ENCODE measurements at regions of chr19 and their contacts with region 1.

Region 1: DNA sequence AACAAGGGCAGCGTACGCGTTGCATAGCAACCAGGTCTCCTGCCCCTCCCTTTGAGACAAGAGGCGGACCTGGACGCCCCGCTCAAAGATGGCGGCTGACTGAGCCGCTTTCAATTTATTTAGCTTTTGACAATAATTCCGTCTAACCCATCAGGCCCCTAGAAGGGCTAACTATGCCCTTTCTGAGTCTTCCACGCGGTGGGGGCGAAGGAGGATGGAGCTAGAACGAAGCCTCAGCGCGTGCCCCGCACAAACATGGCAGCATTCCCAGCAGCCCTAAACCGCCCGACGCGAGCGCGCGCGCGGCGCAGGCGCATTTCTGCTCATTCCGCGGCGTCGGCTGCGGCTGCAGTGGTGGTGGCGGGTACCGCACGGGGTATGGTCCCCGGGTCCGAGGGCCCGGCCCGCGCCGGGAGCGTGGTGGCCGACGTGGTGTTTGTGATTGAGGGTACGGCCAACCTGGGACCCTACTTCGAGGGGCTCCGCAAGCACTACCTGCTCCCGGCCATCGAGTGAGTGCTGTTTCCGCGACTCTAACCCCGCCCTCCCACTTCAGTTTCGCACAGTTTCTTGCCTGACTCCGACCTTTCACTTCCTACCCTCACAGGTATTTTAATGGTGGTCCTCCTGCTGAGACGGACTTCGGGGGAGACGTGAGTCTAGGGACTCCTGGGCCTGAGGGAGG is at the start of gene MED25:
- DNase-seq: peak; percentile 98
- ATAC-seq: peak; percentile 56
- H3K4me3 ChIP-seq: peak within 1 kb of the TSS; percentile 69 to 99 (median 94)
- H3K4me3 Mint-ChIP-seq: peak within 1 kb of the TSS; percentile 97
- H3K27ac ChIP-seq: peak within 1 kb of the TSS; percentile 89 to 98
- H3K27ac Mint-ChIP-seq: peak within 1 kb of the TSS; percentile 98
- H3K4me1 ChIP-seq: peaks cover 13 to 29% of the 10 kb centered on the region in 2 donors
- H3K4me1 Mint-ChIP-seq: peaks cover 41% of the 10 kb centered on the region
- H3K27me3 ChIP-seq: no peaks in the 10 kb centered on the region
- H3K27me3 Mint-ChIP-seq: no peaks in the 10 kb centered on the region
- CTCF ChIP-seq: peak; percentile 44
- total RNA-seq, gene MED25: 123 and 126 TPM in 2 replicates

Region 2: GRCh38 chr19:49118565-49119410 is 699.3 kb before region 1 on chr19 and contains the start of gene C19orf73:
- CTCF ChIA-PET with region 1: no interaction called
- POLR2A ChIA-PET with region 1: no interaction called
- intact Hi-C with region 1: loop called (anchors 5 kb)
- DNase-seq: peak; percentile 99
- ATAC-seq: peak; percentile 81
- H3K4me3 ChIP-seq: peak within 1 kb of the TSS; percentile 39 to 88 (median 62)
- H3K4me3 Mint-ChIP-seq: peak within 1 kb of the TSS; percentile 90
- H3K27ac ChIP-seq: peak within 1 kb of the TSS; percentile 93 to 95
- H3K27ac Mint-ChIP-seq: peak within 1 kb of the TSS; percentile 93
- H3K4me1 ChIP-seq: peaks cover 22 to 33% of the 10 kb centered on the region in 2 donors
- H3K4me1 Mint-ChIP-seq: peaks cover 41% of the 10 kb centered on the region
- H3K27me3 ChIP-seq: peaks cover 0 to 11% (median 2%) of the 10 kb centered on the region in 4 experiments
- H3K27me3 Mint-ChIP-seq: peaks cover 6% of the 10 kb centered on the region
- CTCF ChIP-seq: peak; percentile 53
- total RNA-seq, gene C19orf73: 3.9 and 5.3 TPM in 2 replicates

Region 3: GRCh38 chr19:49473868-49474544 is 344.1 kb before region 1 on chr19 and contains the start of gene FLT3LG:
- CTCF ChIA-PET with region 1: no interaction called
- POLR2A ChIA-PET with region 1: no interaction called
- intact Hi-C with region 1: no loop called
- DNase-seq: peak; percentile 94
- ATAC-seq: peak; percentile 52
- H3K4me3 ChIP-seq: peak within 1 kb of the TSS in 4 of 5 experiments; percentile 53 to 98 (median 70)
- H3K4me3 Mint-ChIP-seq: peak within 1 kb of the TSS; percentile 93
- H3K27ac ChIP-seq: peak within 1 kb of the TSS; percentile 75 to 81
- H3K27ac Mint-ChIP-seq: peak within 1 kb of the TSS; percentile 97
- H3K4me1 ChIP-seq: peaks cover 43 to 73% of the 10 kb centered on the region in 2 donors
- H3K4me1 Mint-ChIP-seq: peaks cover 57% of the 10 kb centered on the region
- H3K27me3 ChIP-seq: no peaks in the 10 kb centered on the region
- H3K27me3 Mint-ChIP-seq: no peaks in the 10 kb centered on the region
- CTCF ChIP-seq: peak; percentile 89
- total RNA-seq, gene FLT3LG: 27.8 and 31.0 TPM in 2 replicates

Region 4: DNA sequence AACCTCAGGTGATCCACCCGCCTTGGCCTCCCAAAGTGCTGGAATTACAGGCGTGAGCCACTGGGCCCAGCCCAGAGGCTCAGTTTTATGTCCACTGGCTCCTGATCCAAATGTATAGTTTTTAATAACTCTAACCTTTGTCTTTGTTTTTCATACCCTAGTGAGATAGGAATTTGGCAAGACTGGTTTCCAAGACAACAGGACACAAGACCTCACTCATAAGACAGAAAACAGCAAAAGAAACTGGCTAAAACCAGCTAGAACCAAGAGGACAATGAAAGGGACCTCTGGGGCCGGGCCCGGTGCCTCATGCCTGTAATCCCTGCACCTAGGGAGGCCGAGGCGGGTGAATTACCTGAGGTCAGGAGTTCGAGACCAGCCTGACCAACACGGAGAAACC is 99.6 kb before region 1 on chr19:
- CTCF ChIA-PET with region 1: no interaction called
- POLR2A ChIA-PET with region 1: interaction called, 11 read pairs
- intact Hi-C with region 1: no loop called
- DNase-seq: no peak
- ATAC-seq: no peak
- H3K4me3 ChIP-seq: no peak overlapping the region
- H3K4me3 Mint-ChIP-seq: peak overlapping the region; percentile 18
- H3K27ac ChIP-seq: no peak overlapping the region
- H3K27ac Mint-ChIP-seq: no peak overlapping the region
- H3K4me1 ChIP-seq: peaks cover 4 to 11% of the 10 kb centered on the region in 2 donors
- H3K4me1 Mint-ChIP-seq: peaks cover 12% of the 10 kb centered on the region
- H3K27me3 ChIP-seq: no peaks in the 10 kb centered on the region
- H3K27me3 Mint-ChIP-seq: no peaks in the 10 kb centered on the region
- CTCF ChIP-seq: no peak

Region 5: GRCh38 chr19:49850473-49851342 is 32.6 kb after region 1 on chr19 and contains the start of gene PTOV1:
- CTCF ChIA-PET with region 1: interaction called, 6 read pairs
- POLR2A ChIA-PET with region 1: interaction called, 16 read pairs
- intact Hi-C with region 1: loop called (anchors 1 kb)
- DNase-seq: peak; percentile 93
- ATAC-seq: peak; percentile 82
- H3K4me3 ChIP-seq: peak within 1 kb of the TSS; percentile 73 to 95 (median 89)
- H3K4me3 Mint-ChIP-seq: peak within 1 kb of the TSS; percentile 93
- H3K27ac ChIP-seq: peak within 1 kb of the TSS; percentile 91 to 95
- H3K27ac Mint-ChIP-seq: peak within 1 kb of the TSS; percentile 98
- H3K4me1 ChIP-seq: peaks cover 30 to 49% of the 10 kb centered on the region in 2 donors
- H3K4me1 Mint-ChIP-seq: peaks cover 48% of the 10 kb centered on the region
- H3K27me3 ChIP-seq: no peaks in the 10 kb centered on the region
- H3K27me3 Mint-ChIP-seq: no peaks in the 10 kb centered on the region
- CTCF ChIP-seq: no peak
- total RNA-seq, gene PTOV1: 225 and 230 TPM in 2 replicates

Region 6: DNA sequence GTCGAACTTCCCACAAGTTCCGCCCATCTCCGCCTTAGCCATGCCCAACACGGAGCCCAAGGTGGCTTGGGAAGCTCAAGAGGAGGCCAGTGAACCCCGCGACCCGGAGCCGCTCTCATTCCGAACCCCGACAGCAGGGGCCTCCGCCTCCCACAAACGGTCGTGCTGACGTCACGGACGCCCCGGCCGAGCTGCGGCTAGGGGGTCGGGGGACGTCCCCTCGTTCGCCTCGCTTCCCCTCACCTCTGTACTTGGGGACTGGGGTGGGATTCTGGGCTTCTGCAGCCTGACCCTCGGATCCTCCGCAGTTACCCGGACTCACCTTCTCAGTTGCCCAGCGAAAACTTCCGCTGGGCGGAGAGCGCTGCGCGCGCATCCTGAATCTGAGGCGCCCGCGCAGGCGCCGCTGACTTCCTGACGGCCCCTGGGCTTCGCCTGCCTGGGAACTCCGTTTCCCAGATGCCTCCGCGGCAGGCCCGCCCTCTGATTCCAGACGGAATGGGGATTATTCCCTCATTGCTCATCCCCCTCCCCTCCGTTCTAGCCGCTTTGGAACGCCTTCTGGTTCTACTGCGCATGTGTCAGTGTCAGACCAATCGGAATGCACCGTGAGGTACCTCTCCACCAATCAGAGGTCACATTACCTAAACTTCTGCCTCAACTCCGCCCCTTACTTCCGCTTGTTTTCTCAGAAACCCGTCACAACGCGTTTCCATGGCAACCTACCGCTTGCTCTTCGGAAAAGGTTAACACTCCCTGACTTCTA is 207.1 kb after region 1 on chr19 and contains the start of gene VRK3:
- CTCF ChIA-PET with region 1: no interaction called
- POLR2A ChIA-PET with region 1: no interaction called
- intact Hi-C with region 1: loop called (anchors 2 kb)
- DNase-seq: peak; percentile 100
- ATAC-seq: peak; percentile 86
- H3K4me3 ChIP-seq: peak within 1 kb of the TSS; percentile 76 to 96 (median 94)
- H3K4me3 Mint-ChIP-seq: peak within 1 kb of the TSS; percentile 94
- H3K27ac ChIP-seq: peak within 1 kb of the TSS; percentile 96 to 98
- H3K27ac Mint-ChIP-seq: peak within 1 kb of the TSS; percentile 97
- H3K4me1 ChIP-seq: peaks cover 15 to 36% of the 10 kb centered on the region in 2 donors
- H3K4me1 Mint-ChIP-seq: peaks cover 41% of the 10 kb centered on the region
- H3K27me3 ChIP-seq: no peaks in the 10 kb centered on the region
- H3K27me3 Mint-ChIP-seq: no peaks in the 10 kb centered on the region
- CTCF ChIP-seq: no peak
- total RNA-seq, gene VRK3: 112 and 123 TPM in 2 replicates

Region 7: DNA sequence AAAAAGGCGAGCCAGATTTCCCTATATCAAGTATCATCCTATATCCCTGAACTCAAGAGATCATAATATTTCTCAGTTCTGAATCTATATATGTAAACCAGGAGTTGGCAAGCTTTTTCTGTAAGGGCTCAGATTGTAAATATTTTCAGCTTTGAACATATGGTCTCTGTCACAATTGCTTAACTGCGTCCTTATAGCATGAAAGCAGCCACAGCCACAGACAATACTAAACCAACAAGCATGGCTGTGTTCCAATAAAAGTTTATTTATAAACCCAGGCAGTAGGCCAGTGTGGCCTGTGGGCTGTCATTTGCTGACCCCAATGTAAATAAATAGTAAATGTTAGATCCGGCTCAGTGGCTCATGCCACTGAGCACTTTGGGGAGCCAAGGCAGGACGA is 373.1 kb after region 1 on chr19:
- CTCF ChIA-PET with region 1: no interaction called
- POLR2A ChIA-PET with region 1: no interaction called
- intact Hi-C with region 1: no loop called
- DNase-seq: no peak
- ATAC-seq: no peak
- H3K4me3 ChIP-seq: no peak overlapping the region
- H3K4me3 Mint-ChIP-seq: no peak overlapping the region
- H3K27ac ChIP-seq: no peak overlapping the region
- H3K27ac Mint-ChIP-seq: no peak overlapping the region
- H3K4me1 ChIP-seq: no peaks in the 10 kb centered on the region
- H3K4me1 Mint-ChIP-seq: no peaks in the 10 kb centered on the region
- H3K27me3 ChIP-seq: peaks cover 0 to 12% (median 3%) of the 10 kb centered on the region in 4 experiments
- H3K27me3 Mint-ChIP-seq: peaks cover 37% of the 10 kb centered on the region
- CTCF ChIP-seq: no peak

Measured in B cell (primary cell).